ENCODE measurements at regions of chr15 and their contacts with region 1.

Region 1: GRCh38 chr15:63093486-63094205 is 28.0 kb upstream of the LACTB start:
- DNase-seq: peak; percentile 60
- H3K4me3 ChIP-seq: no peak overlapping the region
- H3K27ac ChIP-seq: no peak overlapping the region
- H3K4me1 ChIP-seq: peaks cover 9% of the 10 kb centered on the region
- H3K27me3 ChIP-seq: no peaks in the 10 kb centered on the region
- CTCF ChIP-seq: peak; percentile 77 to 96

Region 2: GRCh38 chr15:62337934-62338333 is 755.7 kb before region 1 on chr15:
- CTCF ChIA-PET with region 1: no interaction called
- dilution Hi-C with region 1: no loop called
- in situ Hi-C with region 1: no loop called
- intact Hi-C with region 1: loop called (anchors 10 kb)
- DNase-seq: peak; percentile 88
- H3K4me3 ChIP-seq: no peak overlapping the region
- H3K27ac ChIP-seq: no peak overlapping the region
- H3K4me1 ChIP-seq: peaks cover 26% of the 10 kb centered on the region
- H3K27me3 ChIP-seq: no peaks in the 10 kb centered on the region
- CTCF ChIP-seq: no peak

Region 3: DNA sequence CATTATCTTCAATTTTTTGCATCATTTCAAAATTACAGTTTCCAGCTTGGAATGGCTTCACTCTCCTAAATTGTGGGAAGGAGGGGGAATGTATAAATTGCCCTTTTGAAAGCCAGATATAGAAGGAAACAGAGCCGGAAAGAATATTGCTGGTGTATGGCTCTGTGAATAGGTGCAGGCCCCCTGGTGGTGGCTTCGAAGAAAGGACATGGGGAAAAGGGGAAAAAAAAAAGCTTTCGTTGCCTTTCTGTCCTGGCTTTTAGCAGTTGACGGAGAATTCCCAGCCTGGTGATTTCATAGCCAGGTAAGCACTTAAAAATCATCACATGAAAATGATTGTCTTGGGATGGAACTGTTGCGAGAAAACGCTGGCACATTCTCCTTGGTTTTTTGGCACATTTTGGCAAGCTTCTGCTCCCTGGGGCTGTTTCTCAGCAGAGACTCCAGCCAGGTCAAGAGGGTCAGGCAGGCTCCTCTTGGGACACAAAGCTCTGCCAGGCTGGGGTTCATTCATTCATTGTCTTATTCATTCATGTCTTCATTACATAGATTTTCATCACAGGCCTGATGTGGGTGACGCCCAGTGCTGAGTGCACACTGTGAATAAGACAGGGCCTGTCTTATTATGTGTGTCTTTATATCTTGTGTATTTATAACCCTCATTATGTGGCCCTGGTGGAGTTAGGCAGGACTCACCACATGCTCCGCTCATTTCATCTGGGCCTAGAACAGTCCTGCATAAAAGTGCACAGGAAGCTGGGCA is 351.1 kb before region 1 on chr15:
- CTCF ChIA-PET with region 1: interaction called, 19 read pairs
- dilution Hi-C with region 1: no loop called
- in situ Hi-C with region 1: no loop called
- intact Hi-C with region 1: no loop called
- DNase-seq: peak; percentile 70
- H3K4me3 ChIP-seq: no peak overlapping the region
- H3K27ac ChIP-seq: peak overlapping the region; percentile 38
- H3K4me1 ChIP-seq: peaks cover 55% of the 10 kb centered on the region
- H3K27me3 ChIP-seq: no peaks in the 10 kb centered on the region
- CTCF ChIP-seq: peak; percentile 83 to 85

Region 4: DNA sequence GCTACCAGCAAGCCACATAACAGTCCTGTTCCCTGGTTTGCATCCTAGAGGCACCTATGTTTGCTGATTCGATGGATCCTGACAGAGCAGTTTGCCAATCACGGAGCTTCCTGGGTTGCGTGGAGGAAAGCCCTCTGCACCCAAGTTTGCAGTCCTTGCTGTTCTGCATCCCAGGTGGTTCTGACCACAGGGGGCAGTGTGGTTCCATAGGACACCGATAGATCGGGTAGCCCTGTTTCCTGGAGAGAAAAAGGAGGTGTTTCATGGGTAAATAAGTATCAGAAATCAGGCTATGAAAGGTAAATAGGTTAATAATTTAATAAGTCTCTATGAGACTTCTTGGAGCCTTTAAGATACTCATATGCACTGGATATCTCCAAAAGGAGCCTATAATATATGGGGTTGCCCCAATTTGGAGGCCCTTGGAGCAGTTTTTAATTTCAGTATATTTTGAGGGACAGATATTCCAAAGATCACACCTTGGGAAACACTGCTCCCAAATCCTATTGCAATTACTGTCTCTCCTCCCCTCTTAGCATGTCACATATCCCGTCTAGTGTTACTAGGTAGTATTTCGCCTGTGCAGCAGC is 245.7 kb before region 1 on chr15:
- CTCF ChIA-PET with region 1: no interaction called
- dilution Hi-C with region 1: no loop called
- in situ Hi-C with region 1: no loop called
- intact Hi-C with region 1: loop called (anchors 1 kb)
- DNase-seq: peak; percentile 48
- H3K4me3 ChIP-seq: no peak overlapping the region
- H3K27ac ChIP-seq: no peak overlapping the region
- H3K4me1 ChIP-seq: peaks cover 23% of the 10 kb centered on the region
- H3K27me3 ChIP-seq: no peaks in the 10 kb centered on the region
- CTCF ChIP-seq: peak; percentile 71 to 81

Region 5: GRCh38 chr15:63122002-63122893 is 28.6 kb after region 1 on chr15:
- CTCF ChIA-PET with region 1: no interaction called
- dilution Hi-C with region 1: no loop called
- in situ Hi-C with region 1: no loop called
- intact Hi-C with region 1: loop called (anchors 1 kb)
- DNase-seq: peak; percentile 87
- H3K4me3 ChIP-seq: peak overlapping the region; percentile 81 to 99 (median 96)
- H3K27ac ChIP-seq: peak overlapping the region; percentile 70
- H3K4me1 ChIP-seq: no peaks in the 10 kb centered on the region
- H3K27me3 ChIP-seq: no peaks in the 10 kb centered on the region
- CTCF ChIP-seq: peak in 1 of 2 donors; percentile 27

Region 6: GRCh38 chr15:63146669-63147068 is 53.0 kb after region 1 on chr15:
- CTCF ChIA-PET with region 1: no interaction called
- dilution Hi-C with region 1: no loop called
- in situ Hi-C with region 1: no loop called
- intact Hi-C with region 1: no loop called
- DNase-seq: no peak
- H3K4me3 ChIP-seq: no peak overlapping the region
- H3K27ac ChIP-seq: no peak overlapping the region
- H3K4me1 ChIP-seq: no peaks in the 10 kb centered on the region
- H3K27me3 ChIP-seq: no peaks in the 10 kb centered on the region
- CTCF ChIP-seq: no peak

Measured in mammary epithelial cell (primary cell).